ENCODE measurements at regions of chr2 and their contacts with region 1.

Region 1: GRCh38 chr2:100562732-100563720 is at the start of gene PDCL3:
- DNase-seq: peak; percentile 96
- ATAC-seq: peak; percentile 96 to 98 (median 98)
- H3K4me3 ChIP-seq: peak within 1 kb of the TSS; percentile 57 to 95 (median 84)
- H3K27ac ChIP-seq: peak within 1 kb of the TSS; percentile 80 to 96 (median 90)
- H3K4me1 ChIP-seq: peaks cover 0 to 20% (median 13%) of the 10 kb centered on the region in 9 donors
- H3K27me3 ChIP-seq: no peaks in the 10 kb centered on the region
- CTCF ChIP-seq: peak in 5 of 9 donors; percentile 13 to 50 (median 33)
- total RNA-seq, gene PDCL3: 17.0 to 30.0 (median 23.4) TPM

Region 2: DNA sequence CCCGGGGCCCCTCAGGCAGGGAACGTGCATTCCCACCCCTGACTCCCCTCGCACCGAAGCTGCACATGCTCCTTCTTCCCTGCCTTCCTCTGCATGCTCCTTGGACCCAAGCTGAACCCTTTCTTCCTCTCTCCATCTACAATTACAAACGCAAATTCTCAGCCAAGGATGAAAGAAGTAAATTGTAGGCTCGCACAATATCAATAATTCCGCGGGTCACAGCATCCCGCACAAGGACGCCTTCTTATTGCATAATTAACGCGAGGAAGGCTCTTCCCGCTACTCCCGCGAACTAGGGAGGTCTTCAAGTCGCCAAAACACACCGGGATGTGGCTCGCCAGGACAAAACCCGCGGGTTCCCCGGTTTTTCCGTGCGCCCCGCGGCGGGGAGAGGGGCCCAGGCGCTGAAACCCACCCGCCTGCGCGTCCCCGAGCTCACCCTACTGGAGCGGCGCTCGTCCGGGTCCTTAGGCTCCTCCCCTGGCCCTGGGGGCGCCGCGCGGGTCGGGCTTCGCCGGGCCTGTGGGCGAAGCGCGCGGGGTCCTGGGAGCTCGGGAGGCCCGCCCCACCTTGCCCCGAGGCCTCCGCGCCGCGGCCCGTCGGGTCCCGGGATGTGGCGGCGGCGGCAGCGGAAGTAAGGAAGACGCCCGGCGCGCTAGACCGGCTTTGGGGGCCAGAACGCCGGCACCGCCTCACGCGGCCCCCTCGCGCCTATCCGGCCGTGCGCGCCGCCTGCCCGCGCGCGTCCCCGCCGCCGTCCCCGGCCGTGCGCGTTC is 145.9 kb before region 1 on chr2 and contains the start of gene CHST10:
- intact Hi-C with region 1: loop called in 5 of 10 experiments (anchors 5 to 10 kb)
- DNase-seq: peak; percentile 57 to 67
- ATAC-seq: peak; percentile 92 to 96 (median 93)
- H3K4me3 ChIP-seq: peak within 1 kb of the TSS; percentile 68 to 97 (median 82)
- H3K27ac ChIP-seq: peak within 1 kb of the TSS; percentile 57 to 91 (median 86)
- H3K4me1 ChIP-seq: peaks cover 0 to 25% (median 19%) of the 10 kb centered on the region in 9 donors
- H3K27me3 ChIP-seq: peaks cover 0 to 8% (median 0%) of the 10 kb centered on the region in 7 donors
- CTCF ChIP-seq: no peak
- total RNA-seq, gene CHST10: 6.2 to 11.8 (median 9.5) TPM

Region 3: GRCh38 chr2:100422320-100423055 is 140.5 kb before region 1 on chr2:
- intact Hi-C with region 1: loop called in 5 of 10 experiments (anchors 5 to 10 kb)
- DNase-seq: no peak
- ATAC-seq: peak in 4 of 8 donors; percentile 52 to 67 (median 58)
- H3K4me3 ChIP-seq: no peak overlapping the region
- H3K27ac ChIP-seq: no peak overlapping the region
- H3K4me1 ChIP-seq: peaks cover 0 to 4% (median 0%) of the 10 kb centered on the region in 9 donors
- H3K27me3 ChIP-seq: peaks cover 0 to 5% (median 0%) of the 10 kb centered on the region in 7 donors
- CTCF ChIP-seq: peak in 8 of 9 donors; percentile 26 to 63 (median 46)

Region 4: GRCh38 chr2:100427628-100428258 is 135.3 kb before region 1 on chr2:
- intact Hi-C with region 1: loop called in 4 of 10 experiments (anchors 5 to 10 kb)
- DNase-seq: peak in 1 of 2 donors; percentile 64
- ATAC-seq: peak in 6 of 8 donors; percentile 59 to 88 (median 77)
- H3K4me3 ChIP-seq: no peak overlapping the region
- H3K27ac ChIP-seq: no peak overlapping the region
- H3K4me1 ChIP-seq: peaks cover 0 to 3% (median 0%) of the 10 kb centered on the region in 9 donors
- H3K27me3 ChIP-seq: peaks cover 0 to 5% (median 0%) of the 10 kb centered on the region in 7 donors
- CTCF ChIP-seq: peak; percentile 6 to 63 (median 56)

Region 5: GRCh38 chr2:100494712-100495111 is 68.3 kb before region 1 on chr2:
- intact Hi-C with region 1: no loop called
- DNase-seq: no peak
- ATAC-seq: no peak
- H3K4me3 ChIP-seq: no peak overlapping the region
- H3K27ac ChIP-seq: no peak overlapping the region
- H3K4me1 ChIP-seq: no peaks in the 10 kb centered on the region
- H3K27me3 ChIP-seq: peaks cover 0 to 10% (median 0%) of the 10 kb centered on the region in 7 donors
- CTCF ChIP-seq: no peak

Region 6: GRCh38 chr2:102366406-102367112 is 1803.5 kb after region 1 on chr2:
- intact Hi-C with region 1: no loop called
- DNase-seq: no peak
- ATAC-seq: no peak
- H3K4me3 ChIP-seq: no peak overlapping the region
- H3K27ac ChIP-seq: peak overlapping the region in 1 of 10 donors; percentile 48
- H3K4me1 ChIP-seq: peaks cover 0 to 5% (median 0%) of the 10 kb centered on the region in 9 donors
- H3K27me3 ChIP-seq: no peaks in the 10 kb centered on the region
- CTCF ChIP-seq: no peak

Measured in heart right ventricle (tissue), 16 donors.